Dorsolateral prefrontal cortex (tissue), 120 donors: ENCODE measurements at regions of chr2 and their contacts with region 1.

Region 1: DNA sequence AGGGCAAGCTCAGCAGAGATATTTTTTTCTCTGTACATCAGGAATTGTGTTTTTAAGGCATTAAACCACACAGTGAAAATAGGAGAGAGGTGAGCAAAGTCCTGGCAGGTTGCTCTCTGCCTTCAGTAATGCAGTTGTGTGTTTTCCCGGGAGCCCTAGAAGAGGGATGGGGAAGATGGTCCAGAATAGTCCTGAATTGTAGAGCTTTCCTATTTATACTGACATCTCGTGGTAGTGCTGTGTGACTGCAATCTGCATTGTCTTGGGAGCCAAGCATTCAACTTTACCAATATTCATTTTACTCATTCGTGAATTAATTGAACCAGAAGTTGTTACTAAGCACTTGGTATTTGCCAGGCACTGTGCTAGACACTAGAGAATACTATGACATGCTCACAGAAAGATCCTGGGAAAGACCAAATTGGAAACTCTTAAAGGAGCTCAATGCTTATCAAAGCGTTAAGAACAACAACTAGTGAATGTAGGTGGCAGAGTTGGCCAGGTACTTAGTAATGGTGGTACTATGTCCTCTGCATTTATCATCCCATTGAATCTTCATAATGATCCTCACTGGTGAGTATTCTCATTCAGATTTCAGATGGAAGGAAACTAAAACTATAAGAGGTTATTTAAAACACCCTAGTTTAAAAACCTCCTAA is 214.6 kb downstream of the TRIB2 start:
- DNase-seq: no peak
- H3K4me3 ChIP-seq: no peak overlapping the region
- H3K27ac ChIP-seq: no peak overlapping the region
- H3K27me3 ChIP-seq: no peaks in the 10 kb centered on the region
- CTCF ChIP-seq: peak; percentile 68 to 96 (median 90)

Region 2: GRCh38 chr2:11829947-11830707 is 1101.2 kb before region 1 on chr2:
- intact Hi-C with region 1: loop called in 1 of 2 experiments (anchors 10 kb)
- DNase-seq: peak; percentile 29 to 82 (median 72)
- H3K4me3 ChIP-seq: peak overlapping the region; percentile 0 to 64 (median 38)
- H3K27ac ChIP-seq: peak overlapping the region in 51 of 59 donors; percentile 1 to 89 (median 71)
- H3K27me3 ChIP-seq: no peaks in the 10 kb centered on the region
- CTCF ChIP-seq: peak in 34 of 56 donors; percentile 3 to 53 (median 38)

Region 3: DNA sequence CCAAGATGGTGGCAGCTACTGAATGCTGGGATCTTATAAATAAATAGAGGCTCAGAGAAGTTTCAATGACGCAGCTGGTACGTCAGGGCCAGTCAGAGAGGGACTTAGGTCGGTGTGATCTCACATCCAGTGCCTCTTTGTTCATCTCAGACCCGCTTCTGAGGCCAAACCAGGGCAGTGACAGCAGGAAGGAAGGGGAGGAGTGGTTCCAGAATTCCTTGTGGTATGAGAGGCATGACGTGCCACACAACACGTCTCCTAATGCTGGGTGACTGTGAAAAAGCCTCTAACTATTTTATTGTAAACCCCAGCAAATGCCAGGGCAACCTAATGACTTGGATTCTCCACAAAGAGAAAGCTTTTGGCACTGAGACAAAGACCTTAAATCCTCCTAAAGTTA is 761.6 kb before region 1 on chr2:
- intact Hi-C with region 1: loop called in 1 of 2 experiments (anchors 2 kb)
- DNase-seq: peak in 3 of 10 donors; percentile 12 to 32 (median 25)
- H3K4me3 ChIP-seq: no peak overlapping the region
- H3K27ac ChIP-seq: peak overlapping the region in 49 of 59 donors; percentile 4 to 87 (median 68)
- H3K27me3 ChIP-seq: peaks cover 0 to 4% (median 0%) of the 10 kb centered on the region in 45 donors
- CTCF ChIP-seq: no peak

Region 4: GRCh38 chr2:12766421-12766879 is 164.9 kb before region 1 on chr2:
- intact Hi-C with region 1: loop called in 1 of 2 experiments (anchors 2 kb)
- DNase-seq: peak; percentile 4 to 80 (median 63)
- H3K4me3 ChIP-seq: no peak overlapping the region
- H3K27ac ChIP-seq: peak overlapping the region in 4 of 59 donors; percentile 14 to 46 (median 30)
- H3K27me3 ChIP-seq: peaks cover 0 to 9% (median 0%) of the 10 kb centered on the region in 45 donors
- CTCF ChIP-seq: no peak

Region 5: GRCh38 chr2:12844511-12844910 is 86.8 kb before region 1 on chr2:
- intact Hi-C with region 1: loop called in 1 of 2 experiments (anchors 5 kb)
- DNase-seq: no peak
- H3K4me3 ChIP-seq: peak overlapping the region in 3 of 59 donors; percentile 6 to 15 (median 12)
- H3K27ac ChIP-seq: peak overlapping the region in 1 of 59 donors; percentile 7
- H3K27me3 ChIP-seq: peaks cover 0 to 8% (median 0%) of the 10 kb centered on the region in 45 donors
- CTCF ChIP-seq: no peak

Region 6: DNA sequence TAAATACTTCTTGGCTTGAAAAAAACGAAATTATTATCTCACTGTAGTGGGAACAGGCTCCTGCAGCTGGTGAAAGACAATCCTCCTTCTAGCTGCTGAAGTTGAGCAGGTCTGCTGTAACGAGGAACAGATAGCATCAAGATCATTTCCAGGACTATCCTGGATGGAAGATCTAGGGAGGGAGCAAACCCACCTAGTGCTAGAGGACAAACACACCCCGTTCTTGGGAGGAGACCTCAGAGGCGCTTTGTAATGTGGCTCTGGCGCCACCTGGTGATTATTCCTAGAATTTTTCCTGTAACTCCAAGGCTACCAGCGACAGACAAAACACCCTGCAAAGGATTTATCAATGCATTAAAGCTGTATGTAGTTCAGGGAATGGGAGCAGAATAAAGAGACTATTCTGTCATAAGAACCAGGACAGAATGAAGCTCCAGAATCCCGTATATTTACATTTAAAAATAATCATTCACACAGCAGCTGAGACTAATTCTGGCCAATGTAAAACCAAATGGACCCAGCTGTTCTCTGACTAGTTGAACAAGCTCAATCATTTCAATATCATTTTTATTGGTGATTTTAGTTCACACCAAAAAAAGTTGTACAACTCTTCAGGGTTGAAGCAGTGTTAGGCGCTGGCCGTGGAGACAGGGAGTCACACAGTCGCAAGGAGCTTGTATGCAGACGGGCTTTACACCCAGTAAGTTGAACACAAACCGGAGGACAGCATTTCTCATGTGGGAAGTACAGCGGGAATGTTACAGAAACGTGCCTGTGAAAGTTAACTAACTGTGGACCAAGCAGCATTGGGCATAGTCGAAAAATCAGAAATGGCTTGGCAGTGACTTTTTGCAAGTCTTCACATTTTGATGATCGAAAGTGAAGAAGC is 75.8 kb after region 1 on chr2:
- intact Hi-C with region 1: loop called in 1 of 2 experiments (anchors 10 kb)
- DNase-seq: peak in 8 of 10 donors; percentile 22 to 74 (median 52)
- H3K4me3 ChIP-seq: peak overlapping the region in 52 of 59 donors; percentile 6 to 59 (median 36)
- H3K27ac ChIP-seq: peak overlapping the region in 15 of 59 donors; percentile 6 to 53 (median 31)
- H3K27me3 ChIP-seq: peaks cover 0 to 7% (median 0%) of the 10 kb centered on the region in 45 donors
- CTCF ChIP-seq: peak; percentile 76 to 98 (median 90)